ENCODE measurements at regions of chr19 and their contacts with region 1.

Region 1: GRCh38 chr19:17282488-17283255 is 971 bp downstream of the ANKLE1 start:
- DNase-seq: peak; percentile 88
- ATAC-seq: peak; percentile 84
- H3K4me3 ChIP-seq: peak overlapping the region; percentile 48 to 92 (median 66)
- H3K4me3 Mint-ChIP-seq: peak overlapping the region; percentile 93
- H3K27ac ChIP-seq: no peak overlapping the region
- H3K27ac Mint-ChIP-seq: peak overlapping the region; percentile 63
- H3K4me1 ChIP-seq: peaks cover 5 to 21% of the 10 kb centered on the region in 2 donors
- H3K4me1 Mint-ChIP-seq: peaks cover 8% of the 10 kb centered on the region
- H3K27me3 ChIP-seq: no peaks in the 10 kb centered on the region
- H3K27me3 Mint-ChIP-seq: no peaks in the 10 kb centered on the region
- CTCF ChIP-seq: peak; percentile 92

Region 2: DNA sequence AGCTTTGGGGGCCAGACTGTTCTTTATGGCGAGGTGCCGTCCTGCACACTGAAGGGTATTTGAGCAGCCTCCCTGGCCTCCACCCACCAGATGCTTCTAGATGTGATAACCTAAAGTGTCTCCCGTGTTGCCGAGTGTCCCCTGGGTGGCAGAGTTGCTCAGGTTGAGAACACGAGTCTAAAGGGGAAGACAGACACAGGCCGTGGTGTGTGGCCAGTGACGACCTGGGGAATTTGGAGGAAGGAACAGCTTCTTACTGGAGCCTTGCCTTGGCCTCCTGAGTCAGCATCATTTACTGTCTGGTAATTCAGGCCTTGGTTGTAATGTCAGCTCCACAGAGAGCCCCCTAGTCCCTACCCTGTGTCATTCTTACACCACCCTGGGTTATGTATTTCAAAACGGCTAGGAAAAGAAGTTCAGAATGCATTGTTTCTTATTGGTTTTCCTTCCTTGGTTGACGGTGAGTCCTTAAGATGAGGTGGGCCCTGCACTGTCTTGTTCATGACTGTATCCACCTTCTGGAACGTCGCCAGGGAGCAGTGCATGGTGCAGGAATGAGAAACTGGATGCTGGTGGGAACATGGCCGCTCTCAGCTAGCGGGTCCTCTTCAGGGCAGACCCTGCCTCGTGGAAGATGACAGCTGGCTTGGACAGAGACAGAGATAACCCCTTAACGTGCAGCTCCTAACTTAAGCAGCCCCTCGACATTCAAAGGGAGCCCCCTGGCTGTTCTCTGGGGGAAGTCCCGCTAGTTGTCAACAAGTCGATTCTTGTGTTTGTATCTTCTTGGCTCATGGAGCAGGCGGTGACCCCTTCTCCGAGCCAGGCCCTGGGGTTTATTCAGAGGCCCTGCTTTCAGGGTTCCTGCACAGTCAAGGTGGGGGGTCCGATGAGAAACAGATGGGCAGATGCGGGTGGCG is 446.3 kb before region 1 on chr19:
- CTCF ChIA-PET with region 1: no interaction called
- POLR2A ChIA-PET with region 1: no interaction called
- intact Hi-C with region 1: loop called (anchors 10 kb)
- DNase-seq: peak; percentile 69
- ATAC-seq: peak; percentile 53
- H3K4me3 ChIP-seq: no peak overlapping the region
- H3K4me3 Mint-ChIP-seq: peak overlapping the region; percentile 10
- H3K27ac ChIP-seq: peak overlapping the region in 1 of 2 donors; percentile 5
- H3K27ac Mint-ChIP-seq: peak overlapping the region; percentile 59
- H3K4me1 ChIP-seq: peaks cover 23 to 28% of the 10 kb centered on the region in 2 donors
- H3K4me1 Mint-ChIP-seq: peaks cover 36% of the 10 kb centered on the region
- H3K27me3 ChIP-seq: no peaks in the 10 kb centered on the region
- H3K27me3 Mint-ChIP-seq: no peaks in the 10 kb centered on the region
- CTCF ChIP-seq: no peak

Region 3: GRCh38 chr19:17183858-17184321 is 98.8 kb before region 1 on chr19:
- CTCF ChIA-PET with region 1: interaction called, 5 read pairs
- POLR2A ChIA-PET with region 1: interaction called, 10 read pairs
- intact Hi-C with region 1: no loop called
- DNase-seq: peak; percentile 79
- ATAC-seq: peak; percentile 83
- H3K4me3 ChIP-seq: peak overlapping the region in 4 of 5 experiments; percentile 17 to 53 (median 33)
- H3K4me3 Mint-ChIP-seq: peak overlapping the region; percentile 85
- H3K27ac ChIP-seq: peak overlapping the region; percentile 66 to 76
- H3K27ac Mint-ChIP-seq: peak overlapping the region; percentile 88
- H3K4me1 ChIP-seq: peaks cover 19 to 25% of the 10 kb centered on the region in 2 donors
- H3K4me1 Mint-ChIP-seq: peaks cover 30% of the 10 kb centered on the region
- H3K27me3 ChIP-seq: no peaks in the 10 kb centered on the region
- H3K27me3 Mint-ChIP-seq: no peaks in the 10 kb centered on the region
- CTCF ChIP-seq: no peak

Region 4: DNA sequence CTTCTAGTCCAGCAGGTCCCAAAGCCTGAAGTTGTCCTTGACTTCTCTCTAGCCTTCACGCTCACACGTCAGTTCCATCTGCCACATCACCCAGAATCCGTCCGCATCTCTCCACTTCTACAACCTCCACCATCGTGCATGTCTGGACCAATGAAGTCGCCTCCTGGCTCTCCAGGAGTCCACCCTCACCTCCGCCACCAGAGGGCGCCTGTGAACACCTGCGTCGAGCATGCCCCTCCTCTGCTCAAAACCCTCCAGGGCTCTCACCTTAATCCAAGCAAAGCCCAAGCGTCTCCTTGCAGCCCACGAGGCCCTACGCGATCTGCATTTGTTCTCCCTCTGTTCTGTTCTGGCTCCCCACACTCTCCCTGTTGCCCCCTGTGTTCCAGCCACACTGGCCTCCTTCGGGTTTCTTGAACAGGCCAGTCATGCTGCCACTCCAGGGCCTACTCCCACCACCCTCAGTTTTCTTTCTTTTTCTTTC is 21.8 kb before region 1 on chr19:
- CTCF ChIA-PET with region 1: interaction called, 52 read pairs
- POLR2A ChIA-PET with region 1: interaction called, 6 read pairs
- intact Hi-C with region 1: loop called (anchors 1 kb)
- DNase-seq: peak; percentile 89
- ATAC-seq: peak; percentile 99
- H3K4me3 ChIP-seq: no peak overlapping the region
- H3K4me3 Mint-ChIP-seq: no peak overlapping the region
- H3K27ac ChIP-seq: no peak overlapping the region
- H3K27ac Mint-ChIP-seq: no peak overlapping the region
- H3K4me1 ChIP-seq: peaks cover 0 to 10% of the 10 kb centered on the region in 2 donors
- H3K4me1 Mint-ChIP-seq: peaks cover 10% of the 10 kb centered on the region
- H3K27me3 ChIP-seq: no peaks in the 10 kb centered on the region
- H3K27me3 Mint-ChIP-seq: no peaks in the 10 kb centered on the region
- CTCF ChIP-seq: peak; percentile 91

Measured in B cell (primary cell).